Tibial artery (tissue), 4 donors: ENCODE measurements at regions of chr21 and their contacts with region 1.

Region 1: DNA sequence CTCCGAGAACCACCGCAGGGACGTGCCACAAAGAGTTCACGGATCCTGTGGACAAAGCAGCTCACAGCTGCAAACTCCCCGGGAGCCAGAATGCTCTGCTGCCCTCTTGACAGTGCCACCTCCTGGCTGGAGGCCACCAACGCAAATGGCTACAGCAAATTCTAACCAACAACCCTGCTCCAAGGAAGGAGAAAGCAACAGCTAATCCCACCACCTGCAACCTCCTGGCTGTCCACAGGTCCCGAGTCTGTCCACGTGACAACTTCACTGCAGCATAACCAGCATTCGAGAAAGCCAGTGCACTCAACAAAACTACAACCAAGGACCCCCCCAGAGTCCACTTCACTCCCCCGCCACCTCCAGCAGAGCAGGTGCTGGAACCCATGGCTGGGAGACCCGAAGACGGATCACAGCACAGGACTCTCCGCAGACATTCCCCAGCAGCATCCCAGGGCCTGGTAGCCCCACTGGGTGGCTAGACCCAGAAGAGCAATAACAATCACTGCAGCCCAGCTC is 17.3 kb downstream of the POFUT2 start:
- DNase-seq: peak; percentile 4 to 56
- H3K4me3 ChIP-seq: no peak overlapping the region
- H3K27ac ChIP-seq: no peak overlapping the region
- H3K4me1 ChIP-seq: no peaks in the 10 kb centered on the region
- H3K27me3 ChIP-seq: no peaks in the 10 kb centered on the region
- CTCF ChIP-seq: no peak

Region 2: GRCh38 chr21:45167796-45168222 is 102.6 kb before region 1 on chr21:
- intact Hi-C with region 1: loop called (anchors 10 kb)
- DNase-seq: no peak
- H3K4me3 ChIP-seq: no peak overlapping the region
- H3K27ac ChIP-seq: peak overlapping the region; percentile 53 to 65
- H3K4me1 ChIP-seq: peaks cover 0 to 85% (median 58%) of the 10 kb centered on the region in 4 donors
- H3K27me3 ChIP-seq: no peaks in the 10 kb centered on the region
- CTCF ChIP-seq: no peak

Region 3: GRCh38 chr21:45228171-45228641 is 42.2 kb before region 1 on chr21:
- intact Hi-C with region 1: loop called (anchors 10 kb)
- DNase-seq: peak in 1 of 2 donors; percentile 71
- H3K4me3 ChIP-seq: no peak overlapping the region
- H3K27ac ChIP-seq: no peak overlapping the region
- H3K4me1 ChIP-seq: peaks cover 0 to 11% (median 4%) of the 10 kb centered on the region in 4 donors
- H3K27me3 ChIP-seq: no peaks in the 10 kb centered on the region
- CTCF ChIP-seq: no peak

Region 4: DNA sequence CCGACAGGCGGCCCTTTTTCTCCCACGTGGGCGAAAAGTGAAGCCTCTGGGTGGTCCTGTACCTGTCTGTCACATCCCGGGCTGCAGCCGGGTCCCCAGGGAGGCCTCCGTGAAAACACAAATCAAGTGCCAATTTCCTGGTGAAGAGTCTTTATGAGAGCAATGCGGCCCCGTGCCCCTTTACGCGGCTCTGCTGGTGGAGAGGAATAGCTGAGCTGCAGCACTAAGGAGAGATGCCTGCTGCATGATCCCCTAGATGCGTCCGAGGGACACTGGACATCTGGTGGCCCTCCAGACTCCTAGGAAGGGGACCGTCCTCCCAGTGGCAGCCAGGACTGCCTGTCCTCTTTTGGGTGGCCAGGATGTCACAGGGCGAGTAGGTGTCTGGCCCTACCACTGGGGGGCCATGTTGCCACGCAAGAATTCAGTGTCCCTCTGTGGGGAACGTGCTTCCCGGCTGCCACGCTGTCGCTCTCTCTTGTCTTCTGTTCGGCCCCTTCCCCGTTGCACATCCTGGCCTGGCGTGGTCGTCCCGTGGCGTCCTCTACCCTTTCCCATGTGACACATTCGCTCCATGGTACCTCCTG is 173.3 kb after region 1 on chr21:
- intact Hi-C with region 1: no loop called
- DNase-seq: no peak
- H3K4me3 ChIP-seq: no peak overlapping the region
- H3K27ac ChIP-seq: peak overlapping the region; percentile 49 to 52
- H3K4me1 ChIP-seq: peaks cover 0 to 33% (median 24%) of the 10 kb centered on the region in 4 donors
- H3K27me3 ChIP-seq: no peaks in the 10 kb centered on the region
- CTCF ChIP-seq: peak in 1 of 2 experiments; percentile 15